Naive thymus-derived CD4-positive, alpha-beta T cell (primary cell): ENCODE measurements at regions of chr19 and their contacts with region 1.

Region 1: GRCh38 chr19:2739602-2740313 is at the start of gene SLC39A3:
- DNase-seq: peak; percentile 94 to 99 (median 98)
- ATAC-seq: peak; percentile 100
- H3K4me3 ChIP-seq: peak within 1 kb of the TSS; percentile 72
- H3K4me3 Mint-ChIP-seq: peak within 1 kb of the TSS; percentile 80 to 90 (median 86)
- H3K27ac ChIP-seq: peak within 1 kb of the TSS; percentile 82
- H3K27ac Mint-ChIP-seq: peak within 1 kb of the TSS in 8 of 9 donors; percentile 36 to 87 (median 72)
- H3K4me1 ChIP-seq: peaks cover 7 to 8% of the 10 kb centered on the region in 2 donors
- H3K4me1 Mint-ChIP-seq: peaks cover 8 to 29% (median 24%) of the 10 kb centered on the region in 7 donors
- H3K27me3 ChIP-seq: no peaks in the 10 kb centered on the region
- H3K27me3 Mint-ChIP-seq: peaks cover 6 to 18% (median 14%) of the 10 kb centered on the region in 5 donors
- total RNA-seq, gene SLC39A3: 10.1 to 28.5 (median 17.8) TPM

Region 2: GRCh38 chr19:2648528-2648937 is 91.2 kb before region 1 on chr19:
- CTCF ChIA-PET with region 1: no interaction called
- POLR2A ChIA-PET with region 1: no interaction called
- intact Hi-C with region 1: loop called (anchors 2 kb)
- DNase-seq: peak; percentile 56 to 78 (median 71)
- ATAC-seq: peak; percentile 95
- H3K4me3 ChIP-seq: no peak overlapping the region
- H3K4me3 Mint-ChIP-seq: no peak overlapping the region
- H3K27ac ChIP-seq: no peak overlapping the region
- H3K27ac Mint-ChIP-seq: no peak overlapping the region
- H3K4me1 ChIP-seq: no peaks in the 10 kb centered on the region
- H3K4me1 Mint-ChIP-seq: peaks cover 0 to 2% (median 0%) of the 10 kb centered on the region in 7 donors
- H3K27me3 ChIP-seq: no peaks in the 10 kb centered on the region
- H3K27me3 Mint-ChIP-seq: peaks cover 0 to 2% (median 0%) of the 10 kb centered on the region in 5 donors

Region 3: DNA sequence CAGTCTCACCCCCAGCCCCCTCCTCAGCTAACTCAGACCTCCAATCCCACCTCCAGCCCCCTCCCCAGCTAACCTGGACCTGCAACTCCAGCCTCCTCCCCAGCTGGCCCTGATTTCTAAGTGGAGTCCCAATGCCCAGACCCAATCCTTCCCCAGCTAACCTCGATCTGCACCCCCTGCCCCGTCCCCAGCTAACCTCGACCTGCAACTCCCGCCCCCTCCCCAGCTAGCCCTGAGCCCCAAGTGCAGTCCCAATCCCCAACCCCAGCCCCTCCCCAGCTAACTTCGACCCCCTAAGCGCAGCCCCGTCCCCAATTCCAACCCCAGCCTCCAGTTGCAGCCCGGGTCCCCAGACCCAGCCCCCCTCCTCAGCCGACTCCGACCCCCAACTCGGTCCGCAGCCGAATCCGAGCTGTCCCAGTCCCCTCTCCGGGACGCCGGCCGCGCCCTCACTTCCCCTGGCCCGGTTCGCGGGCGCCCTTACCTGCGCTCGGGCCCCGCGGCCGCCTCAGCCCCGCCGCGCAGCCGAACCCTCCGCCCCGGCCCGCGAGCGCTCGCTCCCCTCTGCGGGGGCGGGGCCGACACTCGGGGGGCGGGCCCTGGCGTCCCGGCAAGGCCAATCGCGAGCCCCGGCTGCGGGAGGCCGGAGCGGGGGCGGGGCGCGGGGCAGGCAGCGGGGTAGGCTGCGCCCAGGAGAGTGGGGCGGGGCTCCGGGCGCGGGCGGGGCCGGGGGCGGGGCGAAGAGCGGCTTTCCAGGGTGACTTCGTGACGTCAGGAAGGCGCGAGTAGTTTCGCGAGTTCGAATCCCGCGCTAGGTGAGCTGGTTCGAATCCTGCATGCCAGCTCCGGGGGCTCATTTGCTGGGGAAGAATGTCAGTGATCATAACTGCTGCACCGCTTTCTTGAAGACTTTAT is 37.3 kb before region 1 on chr19 and contains the start of gene GNG7:
- CTCF ChIA-PET with region 1: no interaction called
- POLR2A ChIA-PET with region 1: no interaction called
- intact Hi-C with region 1: loop called in 1 of 2 experiments (anchors 1 kb)
- DNase-seq: peak; percentile 92 to 98 (median 96)
- ATAC-seq: peak; percentile 100
- H3K4me3 ChIP-seq: peak within 1 kb of the TSS; percentile 39
- H3K4me3 Mint-ChIP-seq: peak within 1 kb of the TSS; percentile 69 to 87 (median 78)
- H3K27ac ChIP-seq: peak within 1 kb of the TSS; percentile 67
- H3K27ac Mint-ChIP-seq: peak within 1 kb of the TSS; percentile 23 to 90 (median 72)
- H3K4me1 ChIP-seq: peaks cover 0 to 16% of the 10 kb centered on the region in 2 donors
- H3K4me1 Mint-ChIP-seq: peaks cover 6 to 41% (median 39%) of the 10 kb centered on the region in 7 donors
- H3K27me3 ChIP-seq: no peaks in the 10 kb centered on the region
- H3K27me3 Mint-ChIP-seq: peaks cover 0 to 12% (median 0%) of the 10 kb centered on the region in 5 donors
- total RNA-seq, gene GNG7: 0.31 to 6.8 (median 6.6) TPM

Region 4: GRCh38 chr19:2750808-2751443 is 11.2 kb after region 1 on chr19:
- CTCF ChIA-PET with region 1: interaction called, 4 read pairs
- POLR2A ChIA-PET with region 1: interaction called, 3 read pairs
- intact Hi-C with region 1: loop called in 1 of 2 experiments (anchors 1 kb)
- DNase-seq: no peak
- ATAC-seq: no peak
- H3K4me3 ChIP-seq: no peak overlapping the region
- H3K4me3 Mint-ChIP-seq: no peak overlapping the region
- H3K27ac ChIP-seq: no peak overlapping the region
- H3K27ac Mint-ChIP-seq: no peak overlapping the region
- H3K4me1 ChIP-seq: peaks cover 0 to 3% of the 10 kb centered on the region in 2 donors
- H3K4me1 Mint-ChIP-seq: no peaks in the 10 kb centered on the region
- H3K27me3 ChIP-seq: no peaks in the 10 kb centered on the region
- H3K27me3 Mint-ChIP-seq: peaks cover 0 to 2% (median 0%) of the 10 kb centered on the region in 5 donors

Region 5: DNA sequence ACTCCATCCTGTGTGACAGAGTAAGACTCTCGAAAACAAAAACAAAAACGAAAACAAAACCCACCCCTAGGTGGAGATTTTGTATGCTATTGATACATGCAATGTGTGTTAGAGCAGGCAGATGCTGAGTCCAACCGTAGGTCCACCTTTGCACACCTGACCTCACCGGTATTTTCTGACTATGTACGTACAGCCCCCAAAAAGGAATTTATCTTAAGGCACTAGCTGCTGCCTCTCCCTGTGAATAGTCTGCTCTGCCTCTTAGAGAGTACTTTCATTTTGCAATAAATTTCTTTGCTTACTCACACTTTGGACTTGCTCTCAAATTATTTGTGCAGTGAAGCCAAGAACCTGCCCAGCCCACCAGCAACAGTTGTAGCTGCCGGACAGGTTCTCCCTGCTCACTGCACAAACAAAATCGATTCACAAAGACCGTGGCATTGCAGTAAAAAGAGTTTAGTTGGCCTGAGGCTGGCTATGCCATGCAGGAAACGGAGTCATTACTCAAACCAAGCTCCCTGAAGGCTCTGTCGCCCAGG is 213.3 kb after region 1 on chr19:
- CTCF ChIA-PET with region 1: no interaction called
- POLR2A ChIA-PET with region 1: no interaction called
- intact Hi-C with region 1: no loop called
- DNase-seq: no peak
- ATAC-seq: no peak
- H3K4me3 ChIP-seq: no peak overlapping the region
- H3K4me3 Mint-ChIP-seq: no peak overlapping the region
- H3K27ac ChIP-seq: no peak overlapping the region
- H3K27ac Mint-ChIP-seq: no peak overlapping the region
- H3K4me1 ChIP-seq: peaks cover 9 to 10% of the 10 kb centered on the region in 2 donors
- H3K4me1 Mint-ChIP-seq: peaks cover 12 to 27% (median 20%) of the 10 kb centered on the region in 7 donors
- H3K27me3 ChIP-seq: no peaks in the 10 kb centered on the region
- H3K27me3 Mint-ChIP-seq: no peaks in the 10 kb centered on the region